ENCODE measurements at regions of chr7 and their contacts with region 1.

Region 1: GRCh38 chr7:152925412-152926147 is 166.0 kb downstream of the ACTR3B start:
- DNase-seq: no peak

Region 2: GRCh38 chr7:152881893-152882292 is 43.7 kb before region 1 on chr7:
- intact Hi-C with region 1: loop called in 1 of 2 experiments (anchors 2 kb)
- DNase-seq: no peak

Region 3: DNA sequence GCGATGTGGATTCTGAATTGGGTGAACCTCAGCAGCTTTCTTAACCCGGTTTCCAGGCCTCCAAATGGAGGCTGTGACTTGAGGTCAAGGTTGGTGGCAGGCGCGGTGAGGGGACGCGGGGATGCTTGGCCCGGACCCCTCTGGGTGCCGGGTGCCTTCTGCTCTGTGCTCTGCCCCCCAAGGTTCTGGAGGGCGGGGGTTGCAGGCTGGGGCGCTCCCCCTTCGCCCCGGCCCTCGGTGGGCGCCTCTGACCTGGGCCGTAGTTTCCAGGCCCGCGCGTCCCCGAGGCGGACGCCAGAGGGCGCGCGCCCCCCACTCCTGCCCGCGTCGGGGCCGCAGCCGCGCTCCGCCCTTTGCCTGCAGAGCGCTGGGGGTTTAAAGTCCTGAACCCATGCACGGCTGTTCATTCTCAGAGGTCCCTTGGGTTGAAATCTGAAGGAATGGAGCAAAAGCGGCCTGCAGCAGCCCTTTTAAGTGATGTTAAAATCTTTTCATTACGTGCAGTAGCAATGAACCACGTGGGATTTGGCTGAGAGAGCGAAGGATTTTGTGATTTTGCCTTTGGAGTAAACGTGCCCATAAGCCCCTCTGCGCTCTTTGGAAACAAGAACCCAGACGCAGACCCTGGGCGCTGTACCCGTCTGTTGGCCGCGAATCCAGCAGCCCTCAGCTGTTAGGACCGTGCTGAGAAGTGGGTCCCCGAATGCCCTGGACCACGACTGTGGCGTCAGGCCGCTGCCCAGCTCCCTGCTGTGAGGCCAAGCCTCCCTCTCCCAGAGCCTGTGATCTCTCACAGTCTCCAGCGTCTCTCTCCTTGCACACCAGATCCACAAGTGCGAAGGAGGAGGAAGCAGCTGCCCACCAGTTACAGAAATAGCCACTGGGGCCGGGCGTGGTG is 31.1 kb before region 1 on chr7:
- intact Hi-C with region 1: loop called in 1 of 2 experiments (anchors 5 kb)
- DNase-seq: no peak

Region 4: DNA sequence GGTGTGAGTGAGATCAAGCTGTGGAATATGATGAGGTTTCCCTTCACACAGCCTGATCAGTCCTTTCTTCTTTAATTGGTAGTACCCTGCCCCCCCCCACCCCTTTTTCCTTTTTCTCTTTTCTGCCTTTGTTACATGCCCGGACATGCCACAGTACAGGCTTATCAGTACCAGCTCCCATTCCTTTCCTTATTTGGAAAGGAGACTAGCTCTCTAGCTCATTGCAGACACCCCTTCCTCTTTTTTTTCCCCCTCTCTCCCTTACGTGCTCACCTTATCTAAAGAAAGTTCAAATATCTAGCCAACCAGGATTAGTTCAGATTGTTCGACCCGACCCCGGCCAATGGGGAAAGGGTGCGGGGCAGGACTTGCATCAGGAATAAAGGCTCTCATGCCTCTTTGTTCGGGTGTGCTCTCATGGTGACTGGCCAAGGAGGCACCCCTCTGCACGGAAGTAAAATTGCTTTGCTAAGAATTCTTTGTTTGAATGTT is 64.4 kb after region 1 on chr7:
- intact Hi-C with region 1: no loop called
- DNase-seq: no peak

Measured in posterior vena cava (tissue), 2 donors.